ENCODE measurements at regions of chr9 and their contacts with region 1.

Region 1: GRCh38 chr9:113310538-113310937 is 7.4 kb upstream of the RNF183 start:
- DNase-seq: no peak
- ATAC-seq: no peak
- H3K4me3 ChIP-seq: no peak overlapping the region
- H3K27ac ChIP-seq: no peak overlapping the region
- H3K4me1 ChIP-seq: no peaks in the 10 kb centered on the region
- H3K27me3 ChIP-seq: no peaks in the 10 kb centered on the region
- CTCF ChIP-seq: no peak
- POLR2A ChIP-seq: no peak

Region 2: GRCh38 chr9:113238859-113239232 is 71.7 kb before region 1 on chr9:
- intact Hi-C with region 1: no loop called
- DNase-seq: no peak
- ATAC-seq: peak; percentile 62 to 74 (median 70)
- H3K4me3 ChIP-seq: peak overlapping the region in 2 of 3 donors; percentile 6 to 27
- H3K27ac ChIP-seq: peak overlapping the region; percentile 31 to 72 (median 60)
- H3K4me1 ChIP-seq: peaks cover 0 to 60% (median 21%) of the 10 kb centered on the region in 4 donors
- H3K27me3 ChIP-seq: no peaks in the 10 kb centered on the region
- CTCF ChIP-seq: no peak
- POLR2A ChIP-seq: no peak

Region 3: DNA sequence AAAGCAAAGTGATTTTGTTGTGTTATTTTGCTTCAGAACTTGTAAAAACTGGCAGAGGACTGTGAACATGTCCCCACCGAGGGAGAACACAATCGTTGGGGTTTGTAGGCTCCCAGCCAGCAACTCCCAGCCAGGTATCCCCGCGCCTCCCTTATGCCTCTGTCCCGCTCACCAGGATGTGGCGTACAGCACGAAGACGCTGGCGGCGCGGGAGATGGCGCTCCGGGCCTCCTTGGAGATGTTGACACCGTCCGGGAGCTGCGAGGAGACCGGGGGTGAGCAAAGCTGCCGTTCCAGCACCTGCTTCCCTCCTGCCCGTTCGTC is 99.3 kb after region 1 on chr9:
- intact Hi-C with region 1: loop called in 1 of 2 experiments (anchors 5 kb)
- DNase-seq: no peak
- ATAC-seq: no peak
- H3K4me3 ChIP-seq: peak overlapping the region; percentile 84 to 95 (median 85)
- H3K27ac ChIP-seq: peak overlapping the region; percentile 94 to 98 (median 94)
- H3K4me1 ChIP-seq: peaks cover 0 to 20% (median 8%) of the 10 kb centered on the region in 4 donors
- H3K27me3 ChIP-seq: no peaks in the 10 kb centered on the region
- CTCF ChIP-seq: no peak
- POLR2A ChIP-seq: no peak

Measured in right lobe of liver (tissue), 6 donors.